Right ventricle myocardium inferior (tissue), 1 donor: ENCODE measurements at regions of chr7 and their contacts with region 1.

Region 1: GRCh38 chr7:151694828-151695580 is 175.3 kb upstream of the RHEB start:
- DNase-seq: peak; percentile 79
- ATAC-seq: peak; percentile 83

Region 2: GRCh38 chr7:151626422-151627115 is 68.4 kb before region 1 on chr7:
- intact Hi-C with region 1: loop called (anchors 5 kb)
- DNase-seq: no peak
- ATAC-seq: peak; percentile 47

Region 3: GRCh38 chr7:151677581-151678235 is 17.3 kb before region 1 on chr7:
- intact Hi-C with region 1: loop called (anchors 2 kb)
- DNase-seq: no peak
- ATAC-seq: no peak

Region 4: GRCh38 chr7:151769188-151769841 is 74.3 kb after region 1 on chr7:
- intact Hi-C with region 1: no loop called
- DNase-seq: no peak
- ATAC-seq: no peak